Activated B cell treated with CpG ODN at 0.5 μM for 24 hours (primary cell): ENCODE measurements at regions of chr2 and their contacts with region 1.

Region 1: GRCh38 chr2:68734688-68735525 is at the start of gene ARHGAP25:
- DNase-seq: peak; percentile 45
- ATAC-seq: peak; percentile 74
- H3K4me3 Mint-ChIP-seq: no peak within 1 kb of the TSS
- H3K27ac Mint-ChIP-seq: no peak within 1 kb of the TSS
- H3K4me1 Mint-ChIP-seq: peaks cover 37% of the 10 kb centered on the region
- H3K27me3 Mint-ChIP-seq: no peaks in the 10 kb centered on the region
- CTCF ChIP-seq: no peak
- total RNA-seq, gene ARHGAP25: 324 and 336 TPM in 2 replicates

Region 2: GRCh38 chr2:68689553-68690537 is 45.1 kb before region 1 on chr2:
- CTCF ChIA-PET with region 1: no interaction called
- POLR2A ChIA-PET with region 1: interaction called, 3 read pairs
- intact Hi-C with region 1: loop called (anchors 1 kb)
- DNase-seq: no peak
- ATAC-seq: peak; percentile 79
- H3K4me3 Mint-ChIP-seq: peak overlapping the region; percentile 59
- H3K27ac Mint-ChIP-seq: peak overlapping the region; percentile 91
- H3K4me1 Mint-ChIP-seq: peaks cover 40% of the 10 kb centered on the region
- H3K27me3 Mint-ChIP-seq: no peaks in the 10 kb centered on the region
- CTCF ChIP-seq: no peak

Region 3: DNA sequence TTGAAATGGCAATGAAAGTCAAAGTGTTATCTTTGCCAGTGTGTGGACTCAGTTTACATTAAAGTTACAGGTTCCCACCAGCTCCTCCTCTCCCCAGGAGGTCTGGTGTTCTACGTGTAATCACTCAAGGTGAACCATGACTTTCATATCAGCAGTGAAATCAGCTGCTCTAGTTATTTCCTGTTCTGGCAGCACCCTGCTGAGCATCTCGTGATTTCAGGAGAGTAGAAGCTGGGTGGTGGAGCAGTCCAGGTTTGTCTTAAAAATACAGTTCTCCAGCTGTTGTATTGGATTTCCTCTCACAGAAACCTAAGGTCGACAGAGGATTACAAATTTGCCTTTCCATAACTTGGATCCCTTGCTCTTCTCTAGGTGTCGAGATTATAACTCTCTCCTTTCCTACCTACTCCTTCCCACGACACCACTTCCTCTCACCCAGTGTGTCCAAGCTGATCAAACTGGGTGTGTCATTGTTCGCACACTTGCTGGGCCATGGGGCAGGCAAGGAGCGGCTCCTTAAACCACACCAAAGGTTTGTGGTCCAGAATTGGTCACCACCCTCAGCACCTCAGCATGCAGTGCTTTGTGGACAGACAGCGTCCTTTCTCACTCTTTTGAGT is 13.3 kb before region 1 on chr2:
- CTCF ChIA-PET with region 1: interaction called, 5 read pairs
- POLR2A ChIA-PET with region 1: interaction called, 74 read pairs
- intact Hi-C with region 1: no loop called
- DNase-seq: no peak
- ATAC-seq: peak; percentile 82
- H3K4me3 Mint-ChIP-seq: peak overlapping the region; percentile 38
- H3K27ac Mint-ChIP-seq: peak overlapping the region; percentile 76
- H3K4me1 Mint-ChIP-seq: peaks cover 77% of the 10 kb centered on the region
- H3K27me3 Mint-ChIP-seq: no peaks in the 10 kb centered on the region
- CTCF ChIP-seq: no peak

Region 4: DNA sequence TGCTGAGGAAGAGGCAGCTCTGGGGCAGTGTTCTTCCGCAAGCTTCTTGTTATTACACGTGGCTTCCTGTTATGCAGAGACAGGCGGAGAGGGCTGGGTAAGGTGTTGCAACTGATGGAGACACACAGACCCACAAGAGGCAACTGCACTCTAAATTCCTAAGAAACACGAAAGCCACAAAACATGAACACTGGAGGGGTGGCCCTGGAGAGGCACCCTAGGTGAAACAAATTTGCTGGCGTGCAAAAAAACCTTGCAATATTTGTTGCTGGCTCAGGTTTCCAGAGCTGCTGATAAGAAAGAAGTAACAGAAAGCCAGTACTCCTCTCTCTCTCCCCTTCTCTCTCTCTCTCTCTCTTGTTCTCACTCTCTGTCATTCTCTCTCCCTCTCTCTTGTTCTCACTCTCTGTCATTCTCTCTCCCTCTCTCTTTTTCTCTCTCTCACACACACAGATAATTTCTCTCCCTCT is 31.5 kb after region 1 on chr2:
- CTCF ChIA-PET with region 1: interaction called, 3 read pairs
- POLR2A ChIA-PET with region 1: interaction called, 51 read pairs
- intact Hi-C with region 1: loop called (anchors 2 kb)
- DNase-seq: no peak
- ATAC-seq: peak; percentile 41
- H3K4me3 Mint-ChIP-seq: peak overlapping the region; percentile 67
- H3K27ac Mint-ChIP-seq: peak overlapping the region; percentile 96
- H3K4me1 Mint-ChIP-seq: peaks cover 98% of the 10 kb centered on the region
- H3K27me3 Mint-ChIP-seq: no peaks in the 10 kb centered on the region
- CTCF ChIP-seq: no peak

Region 5: GRCh38 chr2:68789603-68790002 is 54.7 kb after region 1 on chr2:
- CTCF ChIA-PET with region 1: no interaction called
- POLR2A ChIA-PET with region 1: interaction called, 66 read pairs
- intact Hi-C with region 1: loop called (anchors 1 kb)
- DNase-seq: peak; percentile 75
- ATAC-seq: peak; percentile 87
- H3K4me3 Mint-ChIP-seq: peak overlapping the region; percentile 61
- H3K27ac Mint-ChIP-seq: no peak overlapping the region
- H3K4me1 Mint-ChIP-seq: peaks cover 47% of the 10 kb centered on the region
- H3K27me3 Mint-ChIP-seq: no peaks in the 10 kb centered on the region
- CTCF ChIP-seq: no peak

Region 6: GRCh38 chr2:68870215-68870614 is 135.3 kb after region 1 on chr2:
- CTCF ChIA-PET with region 1: no interaction called
- POLR2A ChIA-PET with region 1: no interaction called
- intact Hi-C with region 1: no loop called
- DNase-seq: no peak
- ATAC-seq: no peak
- H3K4me3 Mint-ChIP-seq: no peak overlapping the region
- H3K27ac Mint-ChIP-seq: no peak overlapping the region
- H3K4me1 Mint-ChIP-seq: no peaks in the 10 kb centered on the region
- H3K27me3 Mint-ChIP-seq: peaks cover 7% of the 10 kb centered on the region
- CTCF ChIP-seq: no peak